ENCODE measurements at regions of chr12 and their contacts with region 1.

Region 1: GRCh38 chr12:122871851-122872780 is 23.8 kb downstream of the VPS37B start:
- DNase-seq: peak; percentile 80
- ATAC-seq: peak; percentile 77
- H3K4me3 Mint-ChIP-seq: peak overlapping the region; percentile 60
- H3K27ac Mint-ChIP-seq: peak overlapping the region; percentile 76
- H3K4me1 Mint-ChIP-seq: peaks cover 58% of the 10 kb centered on the region
- H3K27me3 Mint-ChIP-seq: no peaks in the 10 kb centered on the region

Region 2: GRCh38 chr12:122935318-122935717 is 63.2 kb after region 1 on chr12:
- CTCF ChIA-PET with region 1: no interaction called
- DNase-seq: no peak
- ATAC-seq: no peak
- H3K4me3 Mint-ChIP-seq: no peak overlapping the region
- H3K27ac Mint-ChIP-seq: no peak overlapping the region
- H3K4me1 Mint-ChIP-seq: no peaks in the 10 kb centered on the region
- H3K27me3 Mint-ChIP-seq: no peaks in the 10 kb centered on the region

Region 3: DNA sequence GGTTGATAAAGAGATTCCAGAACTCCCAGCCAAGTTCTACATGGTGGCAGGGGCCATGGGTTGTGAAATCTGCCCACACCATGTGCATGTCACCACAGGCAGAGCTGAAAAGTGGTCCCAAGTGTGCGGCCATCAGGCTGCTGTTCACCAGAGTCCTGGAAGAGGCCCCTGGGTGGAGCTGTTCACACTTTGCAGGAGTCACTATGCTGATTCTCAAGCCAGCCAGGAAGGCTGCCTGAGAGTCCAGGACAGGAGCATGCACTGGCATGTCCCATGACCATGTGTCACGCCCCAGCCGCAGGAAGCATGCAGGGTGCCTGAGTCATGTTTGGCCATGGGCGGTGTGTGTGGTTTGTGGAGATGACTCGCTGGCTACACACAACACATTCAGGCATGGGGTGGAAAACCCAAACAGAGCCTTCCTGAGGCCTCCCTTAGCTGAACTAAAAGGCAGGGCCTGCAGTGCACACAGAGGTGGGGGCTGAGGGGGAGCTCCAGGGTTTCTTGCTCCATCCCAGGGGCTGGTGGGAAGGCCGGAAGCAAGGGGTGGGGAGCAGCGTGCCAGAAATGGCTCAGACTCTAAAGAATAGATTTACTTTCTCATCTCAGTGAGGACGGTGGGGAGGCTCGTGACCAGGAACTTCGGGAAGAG is 74.7 kb after region 1 on chr12:
- CTCF ChIA-PET with region 1: interaction called, 10 read pairs
- DNase-seq: peak; percentile 94
- ATAC-seq: peak; percentile 90
- H3K4me3 Mint-ChIP-seq: no peak overlapping the region
- H3K27ac Mint-ChIP-seq: peak overlapping the region; percentile 74
- H3K4me1 Mint-ChIP-seq: peaks cover 41% of the 10 kb centered on the region
- H3K27me3 Mint-ChIP-seq: no peaks in the 10 kb centered on the region

Region 4: GRCh38 chr12:123271001-123271729 is 399.0 kb after region 1 on chr12:
- CTCF ChIA-PET with region 1: no interaction called
- DNase-seq: peak; percentile 84
- ATAC-seq: peak; percentile 86
- H3K4me3 Mint-ChIP-seq: peak overlapping the region; percentile 78
- H3K27ac Mint-ChIP-seq: no peak overlapping the region
- H3K4me1 Mint-ChIP-seq: peaks cover 18% of the 10 kb centered on the region
- H3K27me3 Mint-ChIP-seq: no peaks in the 10 kb centered on the region

Measured in activated CD8-positive, alpha-beta memory T cell treated with anti-CD3 and anti-CD28 coated beads, Interleukin-2, amount 10 ng/mL, durations not matched to agents 7 days and 5 days (primary cell).